Activated T-helper 1 cell treated with anti-CD3 and anti-CD28 coated beads, Interleukin-12 subunit alpha, Interleukin-12 subunit beta, Interleukin-2, Interleukin-4 antibody, amounts not matched to agents 30 ng/mL and 10 ng/mL and 1 ng/mL, durations not matched to agents 14 hours and 24 hours and 36 hours (primary cell): ENCODE measurements at regions of chr21 and their contacts with region 1.

Region 1: GRCh38 chr21:44024887-44025362 is 12.8 kb downstream of the TRAPPC10 start:
- DNase-seq: no peak
- H3K4me3 Mint-ChIP-seq: peak overlapping the region; percentile 15
- H3K27ac Mint-ChIP-seq: peak overlapping the region; percentile 87
- H3K4me1 Mint-ChIP-seq: peaks cover 61% of the 10 kb centered on the region
- H3K27me3 Mint-ChIP-seq: no peaks in the 10 kb centered on the region

Region 2: GRCh38 chr21:43012595-43012994 is 1012.3 kb before region 1 on chr21:
- intact Hi-C with region 1: loop called (anchors 10 kb)
- DNase-seq: no peak
- H3K4me3 Mint-ChIP-seq: no peak overlapping the region
- H3K27ac Mint-ChIP-seq: no peak overlapping the region
- H3K4me1 Mint-ChIP-seq: peaks cover 8% of the 10 kb centered on the region
- H3K27me3 Mint-ChIP-seq: no peaks in the 10 kb centered on the region

Region 3: GRCh38 chr21:44043613-44044012 is 18.7 kb after region 1 on chr21:
- intact Hi-C with region 1: loop called (anchors 2 kb)
- DNase-seq: no peak
- H3K4me3 Mint-ChIP-seq: no peak overlapping the region
- H3K27ac Mint-ChIP-seq: no peak overlapping the region
- H3K4me1 Mint-ChIP-seq: peaks cover 24% of the 10 kb centered on the region
- H3K27me3 Mint-ChIP-seq: no peaks in the 10 kb centered on the region

Region 4: GRCh38 chr21:44065428-44065827 is 40.5 kb after region 1 on chr21:
- intact Hi-C with region 1: loop called (anchors 2 kb)
- DNase-seq: peak; percentile 78
- H3K4me3 Mint-ChIP-seq: peak overlapping the region; percentile 71
- H3K27ac Mint-ChIP-seq: peak overlapping the region; percentile 94
- H3K4me1 Mint-ChIP-seq: peaks cover 51% of the 10 kb centered on the region
- H3K27me3 Mint-ChIP-seq: no peaks in the 10 kb centered on the region

Region 5: DNA sequence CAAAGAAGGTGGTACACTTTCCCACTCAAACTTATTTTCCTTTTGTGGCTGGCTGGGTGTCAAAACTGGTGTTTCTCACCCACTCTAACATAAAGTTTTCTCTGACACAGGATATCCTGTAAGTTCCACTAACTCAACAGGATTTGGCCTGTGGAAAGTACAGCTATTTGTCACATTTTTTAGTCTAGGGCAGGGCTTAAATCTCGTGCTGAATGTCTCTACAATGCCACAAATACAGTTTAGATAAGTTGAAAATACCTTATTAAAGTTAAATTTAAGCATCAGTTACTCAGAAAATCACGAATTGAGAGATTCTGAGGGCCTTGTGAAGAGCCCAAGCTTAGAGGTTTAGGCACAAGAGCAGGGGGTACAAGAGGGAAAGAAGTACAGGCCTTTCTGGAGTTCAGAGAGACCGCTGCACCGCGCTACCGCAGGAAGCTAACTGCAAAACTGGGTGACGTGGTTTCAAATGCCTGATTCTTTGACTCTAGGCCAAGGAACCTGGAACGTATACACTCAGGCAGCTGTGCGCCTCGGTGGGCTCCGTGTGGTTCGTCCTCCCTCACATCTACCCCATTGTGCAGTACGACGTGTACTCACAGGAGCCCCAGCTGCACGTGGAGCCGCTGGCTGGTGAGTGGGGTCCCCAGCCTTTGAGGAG is 58.8 kb after region 1 on chr21:
- intact Hi-C with region 1: loop called (anchors 2 kb)
- DNase-seq: peak; percentile 71
- H3K4me3 Mint-ChIP-seq: peak overlapping the region; percentile 86
- H3K27ac Mint-ChIP-seq: peak overlapping the region; percentile 98
- H3K4me1 Mint-ChIP-seq: peaks cover 89% of the 10 kb centered on the region
- H3K27me3 Mint-ChIP-seq: no peaks in the 10 kb centered on the region

Region 6: GRCh38 chr21:44255519-44255981 is 230.6 kb after region 1 on chr21:
- intact Hi-C with region 1: no loop called
- DNase-seq: no peak
- H3K4me3 Mint-ChIP-seq: no peak overlapping the region
- H3K27ac Mint-ChIP-seq: no peak overlapping the region
- H3K4me1 Mint-ChIP-seq: no peaks in the 10 kb centered on the region
- H3K27me3 Mint-ChIP-seq: peaks cover 6% of the 10 kb centered on the region